Transverse colon (tissue), 4 donors: ENCODE measurements at regions of chr16 and their contacts with region 1.

Region 1: DNA sequence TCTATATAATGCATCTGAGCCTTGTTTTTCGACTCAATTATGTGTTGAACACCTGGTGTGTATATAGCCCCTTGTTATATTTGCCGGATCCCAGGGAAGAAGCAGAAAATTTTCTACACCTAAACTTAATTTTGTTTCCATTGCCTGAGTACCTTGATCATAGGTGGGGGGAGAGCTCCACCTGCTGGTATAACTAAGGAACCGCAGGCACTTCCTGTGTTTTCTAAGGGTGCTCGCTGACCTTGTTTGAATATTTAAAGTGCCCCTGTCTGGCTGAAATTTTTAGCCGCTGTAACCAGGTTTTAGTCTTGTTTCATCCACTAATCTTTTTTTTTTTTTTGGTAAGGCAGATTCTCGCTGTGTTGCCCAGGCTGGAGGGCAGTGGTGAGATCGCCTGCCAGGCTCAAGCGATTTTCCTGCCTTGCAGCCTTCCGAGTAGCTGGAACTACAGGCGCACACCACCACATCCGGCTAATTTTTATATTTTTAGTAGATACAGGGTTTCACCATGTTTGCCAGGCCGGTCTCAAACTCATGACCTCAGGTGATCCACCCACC is 6.5 kb upstream of the NUBP1 start:
- DNase-seq: peak; percentile 71
- H3K4me3 ChIP-seq: peak overlapping the region in 3 of 4 donors; percentile 15 to 39 (median 30)
- H3K27ac ChIP-seq: peak overlapping the region; percentile 47 to 76 (median 66)
- H3K4me1 ChIP-seq: peaks cover 6 to 21% (median 7%) of the 10 kb centered on the region in 4 donors
- H3K27me3 ChIP-seq: no peaks in the 10 kb centered on the region
- CTCF ChIP-seq: peak; percentile 91 to 99 (median 95)
- EP300 ChIP-seq: no peak
- POLR2A ChIP-seq: no peak

Region 2: GRCh38 chr16:10509534-10510025 is 227.6 kb before region 1 on chr16:
- in situ Hi-C with region 1: loop called in 1 of 4 experiments (anchors 10 kb)
- intact Hi-C with region 1: no loop called
- DNase-seq: peak; percentile 53
- H3K4me3 ChIP-seq: no peak overlapping the region
- H3K27ac ChIP-seq: no peak overlapping the region
- H3K4me1 ChIP-seq: peaks cover 0 to 4% (median 2%) of the 10 kb centered on the region in 4 donors
- H3K27me3 ChIP-seq: no peaks in the 10 kb centered on the region
- CTCF ChIP-seq: peak; percentile 75 to 85 (median 81)
- EP300 ChIP-seq: no peak
- POLR2A ChIP-seq: no peak

Region 3: GRCh38 chr16:10521681-10522274 is 215.4 kb before region 1 on chr16:
- in situ Hi-C with region 1: loop called (anchors 5 to 10 kb)
- intact Hi-C with region 1: loop called (anchors 2 kb)
- DNase-seq: peak; percentile 70
- H3K4me3 ChIP-seq: no peak overlapping the region
- H3K27ac ChIP-seq: no peak overlapping the region
- H3K4me1 ChIP-seq: no peaks in the 10 kb centered on the region
- H3K27me3 ChIP-seq: no peaks in the 10 kb centered on the region
- CTCF ChIP-seq: peak; percentile 84 to 92 (median 88)
- EP300 ChIP-seq: no peak
- POLR2A ChIP-seq: no peak

Region 4: DNA sequence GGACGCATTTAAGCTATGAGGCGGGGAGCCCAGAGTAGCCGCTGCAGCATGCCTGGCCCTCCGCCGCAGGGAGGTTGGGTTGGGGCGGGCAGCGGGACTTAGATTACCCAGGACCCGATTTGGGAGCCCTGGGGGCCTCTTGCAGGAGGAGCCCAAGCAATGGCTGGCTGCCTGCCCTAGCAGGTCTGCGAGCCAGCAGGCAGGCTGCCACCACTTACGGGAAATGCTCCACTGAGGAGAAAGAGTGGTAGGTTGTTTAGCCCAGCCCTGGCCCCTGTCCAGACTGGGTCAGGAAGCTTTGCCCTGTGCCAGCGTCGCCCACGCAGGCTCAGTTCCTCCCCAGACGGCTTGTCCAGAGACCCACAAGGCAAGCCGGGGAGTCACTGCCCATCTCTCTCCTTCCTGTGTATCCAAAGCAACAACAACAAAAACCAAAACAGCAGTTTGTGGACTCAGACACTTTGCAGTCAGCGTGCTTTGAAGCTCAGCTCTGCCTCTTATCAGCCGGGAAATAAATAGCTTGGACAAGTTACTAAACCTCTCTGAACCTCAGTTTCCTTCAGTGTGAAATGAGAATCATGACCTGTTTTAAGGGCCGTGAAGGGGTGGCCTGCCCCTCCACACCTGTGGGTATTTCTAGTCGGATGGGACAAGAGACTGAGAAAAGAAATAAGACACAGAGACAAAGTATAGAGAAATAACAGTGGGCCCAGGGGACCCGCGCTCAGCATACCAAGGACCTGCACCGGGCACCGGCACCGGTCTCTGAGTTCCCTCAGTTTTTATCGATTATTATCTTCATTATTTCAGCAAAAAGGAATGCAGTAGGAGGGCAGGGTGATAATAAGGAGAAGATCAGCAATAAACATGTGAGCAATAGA is 91.9 kb after region 1 on chr16:
- in situ Hi-C with region 1: no loop called
- intact Hi-C with region 1: no loop called
- DNase-seq: peak; percentile 86
- H3K4me3 ChIP-seq: peak overlapping the region in 1 of 4 donors; percentile 13
- H3K27ac ChIP-seq: peak overlapping the region; percentile 77 to 93 (median 84)
- H3K4me1 ChIP-seq: peaks cover 13 to 38% (median 21%) of the 10 kb centered on the region in 4 donors
- H3K27me3 ChIP-seq: no peaks in the 10 kb centered on the region
- CTCF ChIP-seq: no peak
- EP300 ChIP-seq: peak; percentile 22
- POLR2A ChIP-seq: no peak

Region 5: DNA sequence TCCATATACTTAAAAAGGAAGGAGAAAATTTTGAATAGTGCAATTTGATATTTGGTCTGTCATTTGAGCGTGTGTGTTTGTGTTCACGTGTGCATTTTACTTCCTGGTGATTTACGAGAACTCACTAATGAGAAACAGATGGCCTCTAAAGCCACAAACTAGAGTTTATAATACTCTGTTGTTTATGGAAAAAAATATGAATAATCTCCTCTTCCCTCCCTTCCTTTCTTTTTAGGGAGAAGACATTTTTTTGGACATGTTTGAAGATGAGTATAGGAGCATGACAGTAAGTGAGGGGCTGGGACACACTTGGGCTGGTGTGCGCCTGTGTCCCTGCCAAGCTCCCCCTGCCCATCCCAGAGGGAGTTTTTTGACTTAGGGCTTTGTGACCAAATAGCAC is 309.9 kb after region 1 on chr16:
- in situ Hi-C with region 1: no loop called
- intact Hi-C with region 1: no loop called
- DNase-seq: no peak
- H3K4me3 ChIP-seq: no peak overlapping the region
- H3K27ac ChIP-seq: peak overlapping the region in 3 of 4 donors; percentile 7 to 17 (median 16)
- H3K4me1 ChIP-seq: peaks cover 0 to 5% (median 0%) of the 10 kb centered on the region in 4 donors
- H3K27me3 ChIP-seq: no peaks in the 10 kb centered on the region
- CTCF ChIP-seq: no peak
- EP300 ChIP-seq: no peak
- POLR2A ChIP-seq: no peak